Posterior cingulate gyrus (tissue), 11 donors: ENCODE measurements at regions of chr14 and their contacts with region 1.

Region 1: DNA sequence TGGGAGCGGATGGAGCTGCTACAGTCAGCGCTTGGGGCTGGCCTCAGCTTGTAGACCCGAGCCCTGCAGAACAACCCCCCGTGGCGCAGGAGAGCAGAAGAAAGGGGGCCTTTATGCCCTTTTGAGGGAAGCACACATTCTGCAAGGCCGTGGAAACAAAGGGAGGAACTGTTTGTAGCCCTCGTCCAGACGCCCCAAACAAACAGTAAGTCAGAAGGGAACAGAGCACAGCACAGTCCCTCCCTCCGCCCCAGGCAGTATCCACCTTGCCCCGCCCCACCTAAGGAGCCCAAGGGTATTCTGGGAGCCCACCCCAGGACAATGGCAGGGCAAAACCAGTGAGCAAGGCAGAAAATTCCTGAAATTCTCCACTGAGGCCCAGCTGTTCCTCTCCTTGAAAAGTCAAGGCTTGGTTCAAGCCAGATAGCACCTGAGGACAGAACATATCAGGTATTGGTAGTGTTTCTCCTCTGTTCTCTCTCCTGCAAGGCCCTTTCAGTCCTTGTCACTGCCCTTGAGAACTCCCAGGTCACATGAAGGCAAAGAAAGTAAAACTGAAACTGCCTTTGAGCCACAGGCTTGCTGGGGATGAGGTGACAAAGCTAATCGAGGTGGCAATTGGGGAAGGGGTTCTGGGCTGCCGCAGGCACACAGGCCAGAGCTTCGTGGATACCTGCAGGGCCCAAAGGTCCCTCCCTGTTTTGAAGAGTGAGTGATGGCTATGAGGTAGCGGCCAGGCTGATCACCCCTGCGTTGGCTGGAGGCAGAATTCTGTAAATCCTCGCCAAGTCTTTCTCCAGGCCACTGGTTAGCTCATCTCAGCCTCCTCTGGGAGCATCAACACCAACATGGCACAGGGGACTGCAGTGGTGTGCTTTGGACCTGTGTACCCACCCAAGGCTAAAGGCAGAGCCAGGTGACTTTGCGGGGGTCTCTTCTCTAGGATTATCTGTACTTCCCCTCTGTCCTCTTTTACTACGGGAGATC is 499 bp downstream of the DGLUCY start:
- DNase-seq: peak in 7 of 10 donors; percentile 87 to 99 (median 94)

Region 2: GRCh38 chr14:91060351-91061055 is 53.9 kb before region 1 on chr14 and contains the start of gene RPS6KA5:
- intact Hi-C with region 1: loop called (anchors 2 kb)
- DNase-seq: peak; percentile 100

Region 3: DNA sequence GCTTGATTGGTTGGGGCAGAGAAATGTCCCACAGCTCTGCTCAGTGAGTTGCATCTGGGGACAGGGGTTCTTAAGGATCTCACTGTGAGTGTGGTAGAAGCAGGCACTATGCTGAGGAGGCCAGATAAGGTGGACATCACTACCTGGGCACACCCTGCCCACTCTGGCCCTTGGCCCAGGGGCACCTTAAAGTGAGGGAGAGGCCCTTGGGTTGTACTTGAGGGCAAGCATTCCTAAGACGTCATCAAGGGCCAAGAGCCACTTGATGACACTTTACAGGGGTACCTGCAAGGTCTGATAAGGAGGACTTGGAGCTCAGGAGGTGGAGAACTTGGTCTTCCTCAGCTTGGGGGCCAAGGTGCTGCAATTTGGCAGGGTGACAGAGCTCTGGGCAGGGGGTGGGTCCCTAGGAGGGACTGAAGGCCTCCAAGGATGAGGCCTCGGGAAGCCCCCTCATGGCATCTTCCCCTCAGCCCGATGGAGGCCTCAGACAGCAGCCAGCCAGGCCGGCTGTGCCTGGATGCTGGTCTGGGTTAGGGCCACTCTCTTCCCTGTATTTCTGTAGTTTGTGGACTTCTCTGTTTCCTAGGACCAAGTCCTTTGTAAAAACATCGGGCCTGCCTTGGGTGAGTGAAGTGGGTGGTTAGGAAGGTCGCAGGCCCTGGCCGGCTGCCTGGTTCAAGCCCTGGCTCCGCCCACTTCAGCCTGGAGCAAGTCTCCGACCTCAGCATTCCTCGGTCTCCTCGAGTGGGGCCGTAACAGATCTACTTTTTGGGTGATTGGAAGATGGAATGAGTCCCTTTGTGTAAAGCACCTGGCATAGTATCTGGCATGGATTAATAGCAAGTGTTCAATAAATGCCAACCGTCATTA is 105.4 kb after region 1 on chr14:
- intact Hi-C with region 1: no loop called
- DNase-seq: peak in 1 of 10 donors; percentile 50